Ovary (tissue), 10 donors: ENCODE measurements at regions of chr15 and their contacts with region 1.

Region 1: DNA sequence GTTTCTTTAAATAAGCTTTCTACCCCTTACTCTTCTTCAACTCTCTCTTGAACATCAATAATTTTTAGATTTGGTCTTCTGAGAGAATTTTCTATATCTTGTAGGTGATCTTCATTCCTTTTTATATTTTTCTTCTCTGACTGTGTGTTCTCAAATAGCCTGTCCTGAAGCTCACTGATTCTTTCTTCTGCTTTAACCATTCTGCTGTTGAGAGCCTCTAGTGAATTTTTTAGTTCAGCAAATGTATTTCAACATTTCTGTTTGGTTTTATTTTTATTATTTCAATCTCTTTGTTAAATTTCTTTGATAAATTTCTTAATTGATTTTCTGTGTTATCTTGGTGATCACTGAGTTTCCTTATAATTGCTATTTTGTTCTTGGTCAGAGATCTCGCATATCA is 19.6 kb downstream of the IQCH start:
- DNase-seq: no peak
- H3K4me3 ChIP-seq: no peak overlapping the region
- H3K27ac ChIP-seq: no peak overlapping the region
- H3K4me1 ChIP-seq: no peaks in the 10 kb centered on the region
- H3K27me3 ChIP-seq: no peaks in the 10 kb centered on the region
- CTCF ChIP-seq: no peak
- EP300 ChIP-seq: no peak
- POLR2A ChIP-seq: no peak

Region 2: GRCh38 chr15:65841121-65841925 is 1432.9 kb before region 1 on chr15:
- intact Hi-C with region 1: loop called in 1 of 4 experiments (anchors 10 kb)
- DNase-seq: no peak
- H3K4me3 ChIP-seq: no peak overlapping the region
- H3K27ac ChIP-seq: no peak overlapping the region
- H3K4me1 ChIP-seq: peaks cover 2% of the 10 kb centered on the region
- H3K27me3 ChIP-seq: no peaks in the 10 kb centered on the region
- CTCF ChIP-seq: no peak
- EP300 ChIP-seq: no peak
- POLR2A ChIP-seq: no peak